Lower leg skin (tissue), 4 donors: ENCODE measurements at regions of chr3 and their contacts with region 1.

Region 1: DNA sequence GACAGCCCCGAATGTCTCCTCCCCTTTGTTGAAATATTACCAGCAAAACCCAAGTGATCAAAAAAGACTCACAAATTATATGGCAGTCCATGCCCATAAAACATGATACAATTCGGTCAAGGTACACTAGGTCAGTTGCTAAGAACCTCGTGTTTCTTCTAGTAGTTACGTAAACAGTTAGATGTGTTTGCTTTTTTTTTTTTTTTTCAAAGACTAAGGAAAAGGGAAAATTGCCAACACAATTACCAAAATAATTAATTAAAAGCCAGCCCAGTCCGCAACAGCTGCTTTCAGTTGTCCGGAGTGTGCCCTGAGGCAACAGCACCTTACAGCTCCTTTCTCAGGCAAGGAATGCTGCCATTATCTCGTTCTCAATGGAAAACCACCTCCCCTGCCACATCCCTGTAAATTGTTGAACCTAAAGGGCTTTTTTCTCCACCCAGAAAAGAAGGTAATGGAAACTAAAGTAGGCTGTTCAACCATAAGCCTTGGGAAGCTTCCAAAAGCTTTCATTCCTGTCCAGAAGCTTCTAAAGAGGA is 129.2 kb upstream of the TSC22D2 start:
- DNase-seq: no peak
- H3K4me3 ChIP-seq: no peak overlapping the region
- CTCF ChIP-seq: no peak
- POLR2A ChIP-seq: no peak

Region 2: DNA sequence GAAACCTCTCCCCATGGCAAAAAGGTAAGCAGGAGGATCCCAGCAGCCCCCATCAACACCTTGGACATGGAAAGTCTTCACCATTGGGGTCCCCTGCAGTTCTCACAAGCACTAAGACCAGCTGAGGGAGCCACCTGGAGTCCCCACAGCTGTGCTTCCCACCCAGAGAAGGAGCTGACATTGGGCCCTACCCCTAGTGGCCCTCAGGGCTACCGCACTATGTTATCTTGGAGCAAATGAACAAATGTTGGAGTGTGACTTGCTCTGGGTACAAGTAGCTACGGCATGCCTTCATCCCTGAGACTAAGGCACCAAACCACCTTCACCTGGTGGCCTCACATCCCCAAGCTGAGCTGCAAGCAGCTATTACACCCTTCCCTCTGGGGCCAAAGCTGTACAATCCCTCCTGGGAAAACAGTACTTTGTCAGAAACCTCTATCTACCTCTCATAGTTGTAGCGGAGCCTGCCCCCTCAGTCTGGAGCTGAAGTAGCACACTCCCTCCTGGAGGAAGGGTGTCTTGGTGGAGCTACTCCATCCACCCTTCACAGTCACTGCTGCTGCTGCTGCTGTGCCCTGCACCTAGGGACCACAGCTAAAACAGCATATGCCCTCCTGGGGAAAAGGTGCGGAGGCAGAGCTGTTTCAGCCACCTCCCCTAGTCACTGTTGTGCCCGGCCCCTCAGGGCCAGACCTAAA is 224.6 kb after region 1 on chr3:
- intact Hi-C with region 1: loop called (anchors 10 kb)
- DNase-seq: no peak
- H3K4me3 ChIP-seq: no peak overlapping the region
- CTCF ChIP-seq: no peak
- POLR2A ChIP-seq: no peak